ENCODE measurements at regions of chr9 and their contacts with region 1.

Region 1: GRCh38 chr9:128771745-128772519 is at the start of gene ZER1:
- DNase-seq: peak; percentile 94
- H3K4me3 Mint-ChIP-seq: peak within 1 kb of the TSS; percentile 98
- H3K27ac Mint-ChIP-seq: peak within 1 kb of the TSS; percentile 94
- H3K4me1 Mint-ChIP-seq: peaks cover 21% of the 10 kb centered on the region
- H3K27me3 Mint-ChIP-seq: no peaks in the 10 kb centered on the region
- total RNA-seq, gene ZER1: 24.1 to 24.4 TPM

Region 2: GRCh38 chr9:128723866-128724743 is 47.8 kb before region 1 on chr9 and contains the start of gene ZDHHC12:
- CTCF ChIA-PET with region 1: interaction called, 4 read pairs
- POLR2A ChIA-PET with region 1: interaction called, 28 read pairs
- DNase-seq: peak; percentile 100
- H3K4me3 Mint-ChIP-seq: peak within 1 kb of the TSS; percentile 97
- H3K27ac Mint-ChIP-seq: peak within 1 kb of the TSS; percentile 87
- H3K4me1 Mint-ChIP-seq: peaks cover 46% of the 10 kb centered on the region
- H3K27me3 Mint-ChIP-seq: no peaks in the 10 kb centered on the region
- total RNA-seq, gene ZDHHC12: 79.3 to 81.5 TPM

Region 3: DNA sequence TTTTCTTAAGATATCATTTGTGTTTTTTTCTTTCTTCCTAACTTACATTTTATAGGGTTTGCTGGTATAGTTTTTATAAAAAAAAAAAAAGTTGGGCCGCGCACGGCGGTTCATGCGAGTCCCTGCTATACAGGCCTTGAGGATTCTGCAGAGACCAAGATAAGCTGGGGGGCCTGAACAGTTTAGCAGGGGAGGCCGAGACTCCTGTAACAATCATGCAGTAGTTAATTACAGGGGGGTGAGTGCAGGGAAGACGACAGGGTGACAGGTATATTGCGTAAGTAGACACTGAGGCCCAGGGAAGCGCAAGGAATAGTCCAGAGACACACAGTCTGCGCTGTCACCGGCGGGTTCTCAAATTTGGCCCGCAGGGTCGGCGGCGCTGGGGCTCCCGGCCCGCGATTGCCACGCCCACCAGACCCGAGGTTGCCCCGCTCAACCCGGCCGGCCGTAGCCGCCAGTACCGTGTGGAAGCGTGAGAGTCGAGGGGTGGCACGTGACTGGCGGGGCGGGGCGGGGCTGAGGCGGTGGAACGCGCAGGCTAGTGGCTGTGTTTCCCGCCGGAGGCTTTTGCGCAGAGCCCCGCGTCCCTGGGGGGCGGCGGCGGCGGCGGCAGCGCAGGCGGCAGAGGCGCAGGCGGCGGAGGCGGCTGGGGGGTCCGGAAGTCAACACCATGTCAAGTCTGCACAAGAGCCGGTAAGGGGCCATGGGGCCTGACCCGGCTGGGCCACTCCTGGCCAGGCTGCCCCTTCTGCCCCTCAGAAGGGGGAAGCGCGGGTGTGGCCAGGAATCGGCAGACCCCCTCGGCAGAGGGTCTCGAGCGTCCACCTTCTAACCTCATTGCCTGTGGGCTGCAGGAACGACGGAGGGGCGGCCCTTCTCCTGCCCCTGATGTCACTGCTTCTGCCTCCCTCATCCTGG is 15.0 kb after region 1 on chr9 and contains the start of gene TBC1D13:
- CTCF ChIA-PET with region 1: interaction called, 4 read pairs
- POLR2A ChIA-PET with region 1: interaction called, 14 read pairs
- DNase-seq: peak; percentile 89
- H3K4me3 Mint-ChIP-seq: peak within 1 kb of the TSS; percentile 93
- H3K27ac Mint-ChIP-seq: peak within 1 kb of the TSS; percentile 81
- H3K4me1 Mint-ChIP-seq: peaks cover 17% of the 10 kb centered on the region
- H3K27me3 Mint-ChIP-seq: no peaks in the 10 kb centered on the region
- total RNA-seq, gene TBC1D13: 18.0 to 21.4 TPM

Measured in activated CD4-positive, alpha-beta memory T cell treated with anti-CD3 and anti-CD28 coated beads, Interleukin-2, amount 10 ng/mL, durations not matched to agents 7 days and 5 days (primary cell).